Ascending aorta (tissue), 2 donors: ENCODE measurements at regions of chr2 and their contacts with region 1.

Region 1: GRCh38 chr2:224284134-224284946 is 117.6 kb downstream of the FAM124B start:
- DNase-seq: no peak
- H3K4me3 ChIP-seq: no peak overlapping the region
- H3K27ac ChIP-seq: no peak overlapping the region
- H3K4me1 ChIP-seq: no peaks in the 10 kb centered on the region
- H3K27me3 ChIP-seq: no peaks in the 10 kb centered on the region
- CTCF ChIP-seq: peak; percentile 48 to 67 (median 66)

Region 2: GRCh38 chr2:223970343-223971128 is 313.8 kb before region 1 on chr2:
- intact Hi-C with region 1: loop called (anchors 1 kb)
- DNase-seq: no peak
- H3K4me3 ChIP-seq: no peak overlapping the region
- H3K27ac ChIP-seq: no peak overlapping the region
- H3K4me1 ChIP-seq: no peaks in the 10 kb centered on the region
- H3K27me3 ChIP-seq: no peaks in the 10 kb centered on the region
- CTCF ChIP-seq: peak; percentile 74 to 90 (median 82)

Region 3: GRCh38 chr2:223993621-223994232 is 290.6 kb before region 1 on chr2:
- intact Hi-C with region 1: loop called (anchors 1 kb)
- DNase-seq: peak in 1 of 2 donors; percentile 80
- H3K4me3 ChIP-seq: no peak overlapping the region
- H3K27ac ChIP-seq: no peak overlapping the region
- H3K4me1 ChIP-seq: no peaks in the 10 kb centered on the region
- H3K27me3 ChIP-seq: no peaks in the 10 kb centered on the region
- CTCF ChIP-seq: peak; percentile 52 to 81 (median 65)

Region 4: GRCh38 chr2:224039124-224039940 is 245.0 kb before region 1 on chr2 and contains the start of gene SERPINE2:
- intact Hi-C with region 1: loop called (anchors 2 kb)
- DNase-seq: peak in 1 of 2 donors; percentile 71
- H3K4me3 ChIP-seq: peak within 1 kb of the TSS; percentile 70 to 73
- H3K27ac ChIP-seq: no peak within 1 kb of the TSS
- H3K4me1 ChIP-seq: peaks cover 0 to 6% of the 10 kb centered on the region in 2 donors
- H3K27me3 ChIP-seq: no peaks in the 10 kb centered on the region
- CTCF ChIP-seq: peak in 2 of 3 experiments; percentile 18 to 43
- total RNA-seq, gene SERPINE2: 86.1 TPM